MCF 10A (cell line): ENCODE measurements at regions of chr1 and their contacts with region 1.

Region 1: GRCh38 chr1:26279456-26280332 is at the start of gene SH3BGRL3:
- DNase-seq: peak; percentile 82
- H3K4me3 Mint-ChIP-seq: peak within 1 kb of the TSS; percentile 89
- H3K27ac Mint-ChIP-seq: peak within 1 kb of the TSS; percentile 89
- H3K4me1 Mint-ChIP-seq: peaks cover 78% of the 10 kb centered on the region
- H3K27me3 Mint-ChIP-seq: no peaks in the 10 kb centered on the region
- CTCF ChIP-seq: no peak
- total RNA-seq, gene SH3BGRL3: 133 and 170 TPM in 2 replicates

Region 2: GRCh38 chr1:26111530-26112406 is 167.9 kb before region 1 on chr1 and contains the start of gene PDIK1L:
- CTCF ChIA-PET with region 1: no interaction called
- POLR2A ChIA-PET with region 1: interaction called, 5 read pairs
- intact Hi-C with region 1: loop called (anchors 5 kb)
- DNase-seq: peak; percentile 93
- H3K4me3 Mint-ChIP-seq: peak within 1 kb of the TSS; percentile 85
- H3K27ac Mint-ChIP-seq: peak within 1 kb of the TSS; percentile 70
- H3K4me1 Mint-ChIP-seq: no peaks in the 10 kb centered on the region
- H3K27me3 Mint-ChIP-seq: no peaks in the 10 kb centered on the region
- CTCF ChIP-seq: no peak
- total RNA-seq, gene PDIK1L: 10.8 and 10.9 TPM in 2 replicates

Region 3: DNA sequence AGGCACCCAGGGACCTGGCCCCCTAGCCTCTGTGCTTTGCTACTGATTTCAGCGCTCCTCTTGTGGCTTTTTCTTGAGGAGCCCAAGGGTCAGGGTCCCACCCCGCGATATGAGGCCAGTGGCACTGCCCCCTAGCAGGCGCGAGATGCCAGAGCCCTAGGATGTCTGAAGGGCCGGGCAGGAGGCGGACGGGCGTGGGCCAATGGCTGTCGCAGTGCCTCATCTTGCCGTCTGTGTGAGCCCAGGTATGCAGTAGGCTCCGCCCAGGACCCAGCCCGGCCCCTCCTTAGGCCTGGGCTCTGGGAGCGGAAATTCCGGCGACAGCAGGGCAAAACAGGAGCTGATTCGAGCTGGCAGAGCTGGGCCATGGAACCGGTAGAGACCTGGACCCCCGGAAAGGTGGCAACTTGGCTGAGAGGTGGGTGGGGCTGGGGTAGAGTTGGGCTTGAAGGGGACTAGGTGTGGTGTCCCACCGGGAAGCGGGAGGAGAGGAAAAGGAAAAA is 102.5 kb before region 1 on chr1 and contains the start of gene CNKSR1:
- CTCF ChIA-PET with region 1: no interaction called
- POLR2A ChIA-PET with region 1: interaction called, 7 read pairs
- intact Hi-C with region 1: loop called (anchors 1 kb)
- DNase-seq: peak; percentile 82
- H3K4me3 Mint-ChIP-seq: peak within 1 kb of the TSS; percentile 97
- H3K27ac Mint-ChIP-seq: peak within 1 kb of the TSS; percentile 98
- H3K4me1 Mint-ChIP-seq: peaks cover 27% of the 10 kb centered on the region
- H3K27me3 Mint-ChIP-seq: no peaks in the 10 kb centered on the region
- CTCF ChIP-seq: peak; percentile 19
- total RNA-seq, gene CNKSR1: 31.0 and 35.5 TPM in 2 replicates

Region 4: DNA sequence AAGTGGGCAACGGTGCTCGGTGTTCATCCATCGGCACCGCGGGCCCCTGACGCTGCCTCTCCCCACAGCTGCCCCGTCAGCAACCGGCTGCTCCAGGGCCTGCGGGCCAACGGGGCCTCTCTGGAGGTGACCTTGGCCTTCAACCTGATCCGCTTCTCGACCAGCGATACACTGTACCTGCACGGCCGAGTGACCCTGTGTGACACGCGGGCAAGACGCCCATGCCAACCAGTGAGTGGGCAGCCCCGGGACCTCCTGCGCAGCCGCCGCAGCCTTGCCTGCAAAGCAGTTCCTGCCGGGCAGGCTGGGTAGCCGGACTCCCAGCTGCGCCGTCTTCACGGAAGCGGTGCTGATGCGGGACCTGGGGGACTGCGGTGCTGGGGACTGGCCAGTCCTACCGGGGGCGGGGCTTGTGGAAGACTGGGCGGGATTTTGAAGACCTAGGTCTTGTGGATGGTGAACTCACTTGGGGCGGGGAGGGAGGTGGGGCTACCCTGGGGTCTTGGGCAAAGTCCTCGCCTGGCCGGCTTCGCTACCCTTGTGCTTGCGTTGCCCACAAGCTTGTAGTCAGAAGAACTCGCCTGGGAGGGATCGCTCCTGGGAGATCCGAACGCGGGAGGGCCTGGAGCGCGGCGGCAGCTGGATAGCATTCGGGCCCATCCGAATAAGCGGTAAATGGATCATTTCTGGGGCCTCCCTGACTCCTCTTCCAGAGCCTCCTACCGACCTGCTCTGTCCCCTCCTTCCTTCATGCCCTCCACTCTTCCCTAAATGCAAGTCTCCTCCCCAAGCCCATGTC is 54.5 kb before region 1 on chr1:
- CTCF ChIA-PET with region 1: no interaction called
- POLR2A ChIA-PET with region 1: no interaction called
- intact Hi-C with region 1: no loop called
- DNase-seq: no peak
- H3K4me3 Mint-ChIP-seq: no peak overlapping the region
- H3K27ac Mint-ChIP-seq: no peak overlapping the region
- H3K4me1 Mint-ChIP-seq: no peaks in the 10 kb centered on the region
- H3K27me3 Mint-ChIP-seq: peaks cover 11% of the 10 kb centered on the region
- CTCF ChIP-seq: no peak

Region 5: GRCh38 chr1:26306290-26307229 is 26.9 kb after region 1 on chr1 and contains the start of gene UBXN11:
- CTCF ChIA-PET with region 1: interaction called, 9 read pairs
- POLR2A ChIA-PET with region 1: interaction called, 15 read pairs
- intact Hi-C with region 1: loop called (anchors 2 kb)
- DNase-seq: peak; percentile 98
- H3K4me3 Mint-ChIP-seq: peak within 1 kb of the TSS; percentile 92
- H3K27ac Mint-ChIP-seq: peak within 1 kb of the TSS; percentile 97
- H3K4me1 Mint-ChIP-seq: peaks cover 11% of the 10 kb centered on the region
- H3K27me3 Mint-ChIP-seq: no peaks in the 10 kb centered on the region
- CTCF ChIP-seq: no peak
- total RNA-seq, gene UBXN11: 17.7 and 20.3 TPM in 2 replicates

Region 6: DNA sequence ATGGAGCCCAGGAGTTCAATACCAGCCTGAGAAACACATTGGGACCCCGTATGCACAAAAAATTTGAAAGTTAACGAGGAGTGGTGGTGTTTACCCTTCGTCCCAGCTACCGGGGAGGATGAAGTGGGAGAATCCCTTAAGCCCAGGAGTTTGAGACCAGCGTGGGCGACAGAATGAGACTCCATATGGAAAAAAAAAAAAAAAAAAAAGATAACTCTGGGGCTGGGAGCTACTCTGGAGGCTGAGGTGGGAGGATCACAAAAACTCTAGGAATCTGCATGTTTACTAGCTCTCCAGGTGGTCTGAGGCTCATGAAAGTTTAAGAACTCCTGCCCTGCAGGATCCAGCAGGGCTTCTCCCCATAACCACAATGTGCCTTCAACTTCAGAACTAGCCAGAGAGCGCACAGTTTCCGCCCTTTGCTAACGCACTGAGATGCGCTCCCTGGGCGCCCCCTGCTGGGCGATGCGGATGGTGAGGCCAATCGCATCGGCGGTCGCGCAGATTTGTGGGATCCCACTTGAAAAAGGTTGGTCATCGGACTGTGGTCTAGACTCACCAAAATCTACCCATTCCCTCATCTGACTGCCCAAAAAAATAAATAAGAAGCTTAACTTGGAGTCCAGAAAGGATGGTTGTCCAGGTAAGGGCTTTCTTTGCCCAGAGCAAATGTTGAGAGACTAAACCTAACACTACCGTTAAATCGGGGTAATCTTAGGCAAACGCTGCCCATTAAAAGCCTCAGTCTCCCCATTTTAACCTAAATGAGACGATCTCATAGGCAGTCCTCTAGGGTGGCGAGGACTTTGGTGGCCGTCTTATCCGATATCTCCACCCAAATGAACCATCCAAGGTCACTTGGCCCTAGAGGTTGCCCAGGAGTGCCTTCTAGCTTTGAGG is 84.1 kb after region 1 on chr1:
- CTCF ChIA-PET with region 1: interaction called, 8 read pairs
- POLR2A ChIA-PET with region 1: interaction called, 8 read pairs
- intact Hi-C with region 1: loop called (anchors 2 kb)
- DNase-seq: peak; percentile 75
- H3K4me3 Mint-ChIP-seq: no peak overlapping the region
- H3K27ac Mint-ChIP-seq: no peak overlapping the region
- H3K4me1 Mint-ChIP-seq: peaks cover 14% of the 10 kb centered on the region
- H3K27me3 Mint-ChIP-seq: no peaks in the 10 kb centered on the region
- CTCF ChIP-seq: peak; percentile 93

Region 7: DNA sequence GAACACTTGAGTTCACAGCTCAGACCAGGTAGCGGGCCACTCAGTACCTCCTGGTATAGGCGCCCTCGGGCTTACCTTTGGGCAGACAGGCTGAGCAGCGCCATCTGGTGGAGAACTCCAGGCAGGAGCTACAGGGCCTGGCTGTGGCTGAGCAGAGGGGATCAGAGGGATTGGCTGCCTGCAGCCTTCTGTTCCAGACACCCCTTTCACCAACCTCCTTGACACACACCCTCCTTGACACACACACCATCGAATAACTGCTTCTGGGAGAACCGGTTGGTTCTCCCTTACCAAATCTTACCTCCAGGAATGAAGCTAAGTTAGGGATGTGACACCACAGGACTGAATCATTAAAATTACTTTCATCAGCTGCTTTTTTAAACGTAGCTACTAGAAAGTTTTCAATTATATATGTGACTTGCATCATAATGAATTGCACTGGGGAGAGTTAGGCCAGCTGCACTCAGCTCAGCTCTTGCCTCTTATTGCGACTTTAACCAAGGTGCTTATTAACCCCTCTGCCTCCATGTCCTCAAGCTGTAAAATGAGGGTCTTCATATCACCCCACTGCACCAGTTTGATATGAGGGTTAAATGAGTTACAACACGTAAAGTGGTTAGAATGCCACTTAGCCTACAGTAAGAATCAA is 137.5 kb after region 1 on chr1:
- CTCF ChIA-PET with region 1: interaction called, 16 read pairs
- POLR2A ChIA-PET with region 1: interaction called, 4 read pairs
- intact Hi-C with region 1: loop called (anchors 1 kb)
- DNase-seq: peak; percentile 76
- H3K4me3 Mint-ChIP-seq: no peak overlapping the region
- H3K27ac Mint-ChIP-seq: no peak overlapping the region
- H3K4me1 Mint-ChIP-seq: no peaks in the 10 kb centered on the region
- H3K27me3 Mint-ChIP-seq: peaks cover 65% of the 10 kb centered on the region
- CTCF ChIP-seq: peak; percentile 83